CD8-positive, alpha-beta T cell (primary cell): ENCODE measurements at regions of chr4 and their contacts with region 1.

Region 1: GRCh38 chr4:12583275-12583674 is 900.9 kb downstream of the RAB28 start:
- DNase-seq: no peak
- ATAC-seq: no peak
- H3K4me3 ChIP-seq: no peak overlapping the region
- H3K4me3 Mint-ChIP-seq: no peak overlapping the region
- H3K27ac ChIP-seq: no peak overlapping the region
- H3K27ac Mint-ChIP-seq: no peak overlapping the region
- H3K4me1 ChIP-seq: no peaks in the 10 kb centered on the region
- H3K4me1 Mint-ChIP-seq: no peaks in the 10 kb centered on the region
- H3K27me3 ChIP-seq: no peaks in the 10 kb centered on the region
- H3K27me3 Mint-ChIP-seq: no peaks in the 10 kb centered on the region
- CTCF ChIP-seq: no peak

Region 2: DNA sequence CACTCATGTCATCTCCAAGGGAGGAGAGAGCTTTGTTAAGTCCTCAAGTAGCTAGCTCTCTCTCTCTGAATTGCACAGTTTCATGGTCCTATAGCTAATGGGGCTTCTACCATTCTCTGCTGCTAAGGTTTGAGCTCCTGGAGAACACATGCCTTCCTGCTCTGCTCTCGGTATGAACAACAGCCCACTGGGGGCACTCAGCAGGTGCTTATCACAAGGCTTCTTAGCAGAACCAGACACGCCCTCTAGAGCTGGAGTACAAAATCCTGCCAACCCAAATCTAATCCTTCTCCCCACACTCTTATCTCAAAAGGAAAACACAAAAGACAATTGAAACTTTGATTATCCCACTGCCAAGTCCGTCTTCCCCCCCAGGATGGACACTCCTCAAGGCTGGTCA is 1331.1 kb before region 1 on chr4:
- CTCF ChIA-PET with region 1: no interaction called
- POLR2A ChIA-PET with region 1: no interaction called
- intact Hi-C with region 1: loop called in 1 of 2 experiments (anchors 5 kb)
- DNase-seq: no peak
- ATAC-seq: no peak
- H3K4me3 ChIP-seq: no peak overlapping the region
- H3K4me3 Mint-ChIP-seq: no peak overlapping the region
- H3K27ac ChIP-seq: no peak overlapping the region
- H3K27ac Mint-ChIP-seq: no peak overlapping the region
- H3K4me1 ChIP-seq: no peaks in the 10 kb centered on the region
- H3K4me1 Mint-ChIP-seq: peaks cover 5% of the 10 kb centered on the region
- H3K27me3 ChIP-seq: no peaks in the 10 kb centered on the region
- H3K27me3 Mint-ChIP-seq: no peaks in the 10 kb centered on the region
- CTCF ChIP-seq: no peak

Region 3: DNA sequence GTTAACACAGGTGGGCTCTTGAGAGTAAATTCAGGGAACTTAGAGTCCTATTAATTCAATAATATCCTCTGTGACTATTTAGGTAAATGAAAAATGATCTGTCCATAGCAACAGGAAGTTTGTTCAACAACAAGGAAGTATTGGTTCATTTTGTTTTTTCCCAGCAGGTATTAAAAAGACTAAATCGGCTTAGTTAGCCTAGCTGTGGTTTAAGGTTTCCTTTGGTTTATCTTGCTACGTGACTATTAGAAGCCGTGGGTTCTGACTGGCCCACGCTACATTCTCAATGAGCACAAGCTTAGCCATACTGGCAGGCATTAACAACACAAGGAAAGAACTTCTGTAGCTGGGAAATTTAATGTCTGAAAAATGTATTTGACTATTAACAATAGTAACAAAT is 985.8 kb before region 1 on chr4:
- CTCF ChIA-PET with region 1: no interaction called
- POLR2A ChIA-PET with region 1: no interaction called
- intact Hi-C with region 1: loop called in 1 of 2 experiments (anchors 5 kb)
- DNase-seq: no peak
- ATAC-seq: no peak
- H3K4me3 ChIP-seq: no peak overlapping the region
- H3K4me3 Mint-ChIP-seq: no peak overlapping the region
- H3K27ac ChIP-seq: no peak overlapping the region
- H3K27ac Mint-ChIP-seq: no peak overlapping the region
- H3K4me1 ChIP-seq: no peaks in the 10 kb centered on the region
- H3K4me1 Mint-ChIP-seq: no peaks in the 10 kb centered on the region
- H3K27me3 ChIP-seq: no peaks in the 10 kb centered on the region
- H3K27me3 Mint-ChIP-seq: no peaks in the 10 kb centered on the region
- CTCF ChIP-seq: no peak

Region 4: GRCh38 chr4:12146339-12146738 is 436.9 kb before region 1 on chr4:
- CTCF ChIA-PET with region 1: no interaction called
- POLR2A ChIA-PET with region 1: no interaction called
- intact Hi-C with region 1: no loop called
- DNase-seq: no peak
- ATAC-seq: no peak
- H3K4me3 ChIP-seq: no peak overlapping the region
- H3K4me3 Mint-ChIP-seq: no peak overlapping the region
- H3K27ac ChIP-seq: no peak overlapping the region
- H3K27ac Mint-ChIP-seq: no peak overlapping the region
- H3K4me1 ChIP-seq: no peaks in the 10 kb centered on the region
- H3K4me1 Mint-ChIP-seq: no peaks in the 10 kb centered on the region
- H3K27me3 ChIP-seq: no peaks in the 10 kb centered on the region
- H3K27me3 Mint-ChIP-seq: no peaks in the 10 kb centered on the region
- CTCF ChIP-seq: no peak